ENCODE measurements at regions of chr7 and their contacts with region 1.

Region 1: DNA sequence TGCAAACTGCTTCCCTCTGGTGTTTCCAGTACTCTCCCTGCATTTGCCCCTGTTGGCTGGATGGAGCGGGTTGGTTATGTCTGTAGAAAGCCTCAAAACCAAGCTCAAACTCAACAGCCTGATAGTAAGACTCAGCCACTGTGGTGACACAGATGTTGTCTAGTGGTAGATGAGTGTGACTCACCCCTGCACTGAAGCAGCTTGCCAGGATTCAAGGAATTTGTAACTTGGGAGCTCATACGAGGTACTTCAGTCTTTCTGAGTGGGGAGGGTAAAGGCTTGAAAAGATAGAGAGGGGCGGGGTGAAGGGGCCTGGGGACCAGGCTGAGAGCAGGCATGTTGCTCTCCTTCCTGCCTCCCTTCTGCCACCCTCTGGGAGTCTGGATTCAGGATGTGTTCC is 22.9 kb upstream of the AQP1 start:
- DNase-seq: no peak
- H3K4me3 ChIP-seq: no peak overlapping the region
- H3K27ac ChIP-seq: peak overlapping the region; percentile 66 to 74 (median 70)
- H3K4me1 ChIP-seq: peaks cover 22 to 61% (median 53%) of the 10 kb centered on the region in 4 donors
- H3K27me3 ChIP-seq: no peaks in the 10 kb centered on the region
- CTCF ChIP-seq: peak in 1 of 3 experiments; percentile 10
- EP300 ChIP-seq: no peak
- POLR2A ChIP-seq: no peak

Region 2: GRCh38 chr7:30845426-30846135 is 43.2 kb before region 1 on chr7:
- intact Hi-C with region 1: no loop called
- DNase-seq: no peak
- H3K4me3 ChIP-seq: no peak overlapping the region
- H3K27ac ChIP-seq: peak overlapping the region; percentile 88 to 95 (median 90)
- H3K4me1 ChIP-seq: peaks cover 50 to 97% (median 92%) of the 10 kb centered on the region in 4 donors
- H3K27me3 ChIP-seq: no peaks in the 10 kb centered on the region
- CTCF ChIP-seq: no peak
- EP300 ChIP-seq: no peak
- POLR2A ChIP-seq: no peak

Region 3: DNA sequence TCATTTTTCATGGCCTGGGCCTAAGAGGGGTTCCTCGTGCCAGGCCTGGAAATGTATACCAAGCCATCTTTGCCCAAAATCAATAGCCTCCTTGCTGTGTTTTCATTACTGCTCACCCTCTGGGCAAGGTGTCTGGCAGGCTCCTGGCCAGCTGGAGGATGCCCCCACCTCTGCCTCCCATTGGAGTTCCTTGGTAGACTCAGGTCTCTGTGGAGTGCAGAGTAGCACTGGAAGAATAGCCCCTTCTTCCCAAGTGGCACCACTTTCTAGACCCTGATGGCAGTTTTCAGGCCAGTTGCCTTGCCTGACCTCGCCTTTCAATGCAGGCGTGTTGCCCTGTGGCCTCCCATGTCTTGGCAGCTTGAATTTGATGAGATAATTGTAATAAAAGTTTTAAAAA is 32.8 kb before region 1 on chr7:
- intact Hi-C with region 1: loop called (anchors 1 kb)
- DNase-seq: no peak
- H3K4me3 ChIP-seq: no peak overlapping the region
- H3K27ac ChIP-seq: peak overlapping the region in 2 of 4 donors; percentile 88 to 95
- H3K4me1 ChIP-seq: peaks cover 21 to 89% (median 72%) of the 10 kb centered on the region in 4 donors
- H3K27me3 ChIP-seq: no peaks in the 10 kb centered on the region
- CTCF ChIP-seq: no peak
- EP300 ChIP-seq: no peak
- POLR2A ChIP-seq: no peak